HCT116 (cell line): ENCODE measurements at regions of chr2 and their contacts with region 1.

Region 1: GRCh38 chr2:209960676-209961630 is 41.5 kb upstream of the RPE start:
- DNase-seq: peak; percentile 65
- ATAC-seq: peak; percentile 98
- H3K4me3 ChIP-seq: no peak overlapping the region
- H3K27ac ChIP-seq: no peak overlapping the region
- H3K4me1 ChIP-seq: peaks cover 0 to 5% of the 10 kb centered on the region in 2 experiments; a peak in 2 of 4 replicates
- H3K27me3 ChIP-seq: no peaks in the 10 kb centered on the region
- CTCF ChIP-seq: peak; percentile 65 to 77 (median 76)
- POLR2A ChIP-seq: no peak
- RAD21 ChIP-seq: peak; percentile 82

Region 2: DNA sequence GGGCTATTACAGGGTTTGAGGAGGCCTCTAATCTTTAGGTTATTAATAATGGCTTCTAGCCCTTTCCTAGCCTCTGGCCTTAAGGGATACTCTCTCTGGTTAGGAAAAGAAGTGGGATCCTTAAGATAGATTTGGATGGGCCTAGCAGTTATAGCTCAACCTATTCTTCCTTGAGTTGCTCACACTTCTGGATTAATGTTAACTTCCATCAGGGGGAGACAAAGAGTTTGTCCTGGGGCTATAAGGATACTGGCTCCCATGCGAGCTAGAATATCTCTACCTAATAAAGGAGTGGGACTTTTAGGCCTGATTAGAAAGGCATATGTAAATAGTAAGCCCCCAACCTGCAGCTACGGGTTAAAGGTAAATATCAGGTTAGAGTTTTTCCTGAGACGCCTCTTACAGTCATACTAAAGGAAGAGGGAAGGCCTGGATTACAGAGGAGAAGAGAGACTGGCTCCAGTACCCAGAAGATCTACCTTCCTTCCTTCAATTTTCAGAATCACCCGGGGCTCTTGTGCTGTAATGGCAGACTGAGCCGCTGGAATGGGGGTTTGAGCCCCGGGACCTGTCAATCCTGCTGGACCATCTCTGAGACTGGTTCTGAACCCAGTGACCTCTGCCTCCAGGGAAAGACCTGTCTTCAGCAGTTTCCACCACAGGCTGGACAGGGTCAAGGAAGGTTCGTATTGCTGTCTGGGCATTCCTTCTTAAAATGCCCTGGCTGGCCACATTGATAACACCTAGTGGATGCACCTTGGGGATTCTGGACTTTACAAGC is 1568.5 kb before region 1 on chr2:
- CTCF ChIA-PET with region 1: no interaction called
- POLR2A ChIA-PET with region 1: no interaction called
- RAD21 ChIA-PET with region 1: no interaction called
- intact Hi-C with region 1: loop called (anchors 10 kb)
- DNase-seq: no peak
- ATAC-seq: peak; percentile 59
- H3K4me3 ChIP-seq: no peak overlapping the region
- H3K27ac ChIP-seq: no peak overlapping the region
- H3K4me1 ChIP-seq: no peaks in the 10 kb centered on the region
- H3K27me3 ChIP-seq: no peaks in the 10 kb centered on the region
- CTCF ChIP-seq: peak in 2 of 3 experiments; percentile 39; a peak in 3 of 6 replicates
- POLR2A ChIP-seq: no peak
- RAD21 ChIP-seq: peak; percentile 19; the same call in 1 of the 2 replicates

Region 3: GRCh38 chr2:209577376-209578357 is 383.3 kb before region 1 on chr2:
- CTCF ChIA-PET with region 1: interaction called, 6 read pairs
- POLR2A ChIA-PET with region 1: no interaction called
- RAD21 ChIA-PET with region 1: no interaction called
- intact Hi-C with region 1: loop called (anchors 5 kb)
- DNase-seq: peak; percentile 6
- ATAC-seq: no peak
- H3K4me3 ChIP-seq: no peak overlapping the region
- H3K27ac ChIP-seq: no peak overlapping the region
- H3K4me1 ChIP-seq: no peaks in the 10 kb centered on the region
- H3K27me3 ChIP-seq: no peaks in the 10 kb centered on the region
- CTCF ChIP-seq: peak in 2 of 3 experiments; percentile 51 to 60; a peak in 3 of 6 replicates
- POLR2A ChIP-seq: no peak
- RAD21 ChIP-seq: peak; percentile 59

Region 4: DNA sequence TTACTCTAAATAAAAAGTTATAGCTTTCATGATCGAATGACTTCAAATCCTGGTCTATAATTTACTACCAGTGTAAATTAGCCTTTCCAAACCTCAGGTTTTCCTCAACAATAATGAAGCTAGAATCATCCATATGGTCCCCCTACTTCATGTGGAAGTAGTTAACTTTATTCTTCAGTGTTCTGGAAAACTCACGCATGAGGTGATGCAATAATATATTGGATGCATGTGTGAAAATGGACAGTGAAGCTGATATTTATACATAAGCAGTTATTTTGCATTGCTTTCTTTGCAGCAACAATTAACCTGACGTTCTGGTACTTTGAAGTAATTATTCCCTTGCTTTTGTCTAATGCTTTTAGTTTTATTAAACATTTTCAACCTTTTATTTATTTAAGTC is 207.9 kb before region 1 on chr2:
- CTCF ChIA-PET with region 1: no interaction called
- POLR2A ChIA-PET with region 1: no interaction called
- RAD21 ChIA-PET with region 1: no interaction called
- intact Hi-C with region 1: no loop called
- DNase-seq: no peak
- ATAC-seq: no peak
- H3K4me3 ChIP-seq: no peak overlapping the region
- H3K27ac ChIP-seq: no peak overlapping the region
- H3K4me1 ChIP-seq: no peaks in the 10 kb centered on the region
- H3K27me3 ChIP-seq: no peaks in the 10 kb centered on the region
- CTCF ChIP-seq: no peak
- POLR2A ChIP-seq: no peak
- RAD21 ChIP-seq: no peak

Region 5: DNA sequence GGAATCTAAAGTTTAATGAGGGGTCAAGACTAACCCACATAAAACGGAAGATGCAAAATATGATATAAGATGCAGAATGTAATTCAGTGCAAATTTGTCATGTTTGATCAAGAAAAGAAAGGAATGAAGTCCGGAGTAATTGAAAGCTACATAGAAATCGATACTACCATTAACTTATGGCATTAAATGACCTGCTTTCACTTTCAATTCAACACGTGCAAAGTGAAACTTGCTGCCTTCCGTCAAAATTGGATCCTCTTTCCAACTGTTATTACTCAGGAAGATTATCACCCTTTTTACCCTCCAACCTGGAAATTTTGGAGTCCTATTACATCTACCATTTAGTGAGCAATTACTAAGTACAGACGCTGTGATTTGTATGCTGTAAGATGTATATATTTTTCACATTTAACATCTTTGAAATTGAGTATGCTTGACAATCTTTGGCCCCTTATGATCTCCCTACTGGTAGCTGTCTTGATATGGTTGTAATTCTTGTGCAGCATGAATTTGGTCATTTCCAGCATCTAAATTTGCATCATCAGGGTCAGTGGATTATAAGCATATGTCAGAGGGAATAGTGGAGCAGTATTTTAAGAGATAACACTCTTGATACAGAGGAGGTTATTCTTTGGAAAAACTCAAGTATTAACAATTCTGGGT is 170.8 kb before region 1 on chr2:
- CTCF ChIA-PET with region 1: interaction called, 12 read pairs
- POLR2A ChIA-PET with region 1: no interaction called
- RAD21 ChIA-PET with region 1: no interaction called
- intact Hi-C with region 1: no loop called
- DNase-seq: no peak
- ATAC-seq: no peak
- H3K4me3 ChIP-seq: no peak overlapping the region
- H3K27ac ChIP-seq: no peak overlapping the region
- H3K4me1 ChIP-seq: no peaks in the 10 kb centered on the region
- H3K27me3 ChIP-seq: no peaks in the 10 kb centered on the region
- CTCF ChIP-seq: no peak
- POLR2A ChIP-seq: no peak
- RAD21 ChIP-seq: no peak

Region 6: GRCh38 chr2:209946539-209946938 is 14.4 kb before region 1 on chr2:
- CTCF ChIA-PET with region 1: interaction called, 14 read pairs
- POLR2A ChIA-PET with region 1: no interaction called
- RAD21 ChIA-PET with region 1: no interaction called
- intact Hi-C with region 1: no loop called
- DNase-seq: no peak
- ATAC-seq: no peak
- H3K4me3 ChIP-seq: no peak overlapping the region
- H3K27ac ChIP-seq: no peak overlapping the region
- H3K4me1 ChIP-seq: no peaks in the 10 kb centered on the region; a peak in 1 of 4 replicates
- H3K27me3 ChIP-seq: no peaks in the 10 kb centered on the region
- CTCF ChIP-seq: no peak
- POLR2A ChIP-seq: no peak
- RAD21 ChIP-seq: no peak

Region 7: DNA sequence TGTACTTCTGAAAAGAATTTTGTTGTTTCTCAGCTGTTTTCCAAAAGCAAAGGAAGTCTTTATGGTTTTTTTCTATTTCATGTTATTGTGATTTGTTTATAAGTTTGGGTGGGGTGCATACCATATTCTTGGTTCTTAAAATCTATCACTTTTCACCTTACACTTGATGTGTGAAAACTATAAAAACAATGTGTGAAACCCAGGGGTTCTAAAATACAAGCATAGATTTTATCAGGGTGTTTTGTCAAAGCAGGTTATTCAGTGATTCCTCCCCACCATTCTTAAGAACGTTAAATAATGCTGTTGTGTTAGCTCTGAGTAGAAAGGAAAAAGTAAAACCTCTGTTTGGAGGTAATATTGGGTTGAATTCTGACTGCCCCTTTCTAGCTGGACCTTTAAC is 59.2 kb after region 1 on chr2:
- CTCF ChIA-PET with region 1: no interaction called
- POLR2A ChIA-PET with region 1: no interaction called
- RAD21 ChIA-PET with region 1: no interaction called
- intact Hi-C with region 1: no loop called
- DNase-seq: no peak
- ATAC-seq: no peak
- H3K4me3 ChIP-seq: no peak overlapping the region
- H3K27ac ChIP-seq: no peak overlapping the region
- H3K4me1 ChIP-seq: no peaks in the 10 kb centered on the region
- H3K27me3 ChIP-seq: no peaks in the 10 kb centered on the region
- CTCF ChIP-seq: no peak
- POLR2A ChIP-seq: no peak
- RAD21 ChIP-seq: no peak